ENCODE measurements at regions of chr3 and their contacts with region 1.

Region 1: DNA sequence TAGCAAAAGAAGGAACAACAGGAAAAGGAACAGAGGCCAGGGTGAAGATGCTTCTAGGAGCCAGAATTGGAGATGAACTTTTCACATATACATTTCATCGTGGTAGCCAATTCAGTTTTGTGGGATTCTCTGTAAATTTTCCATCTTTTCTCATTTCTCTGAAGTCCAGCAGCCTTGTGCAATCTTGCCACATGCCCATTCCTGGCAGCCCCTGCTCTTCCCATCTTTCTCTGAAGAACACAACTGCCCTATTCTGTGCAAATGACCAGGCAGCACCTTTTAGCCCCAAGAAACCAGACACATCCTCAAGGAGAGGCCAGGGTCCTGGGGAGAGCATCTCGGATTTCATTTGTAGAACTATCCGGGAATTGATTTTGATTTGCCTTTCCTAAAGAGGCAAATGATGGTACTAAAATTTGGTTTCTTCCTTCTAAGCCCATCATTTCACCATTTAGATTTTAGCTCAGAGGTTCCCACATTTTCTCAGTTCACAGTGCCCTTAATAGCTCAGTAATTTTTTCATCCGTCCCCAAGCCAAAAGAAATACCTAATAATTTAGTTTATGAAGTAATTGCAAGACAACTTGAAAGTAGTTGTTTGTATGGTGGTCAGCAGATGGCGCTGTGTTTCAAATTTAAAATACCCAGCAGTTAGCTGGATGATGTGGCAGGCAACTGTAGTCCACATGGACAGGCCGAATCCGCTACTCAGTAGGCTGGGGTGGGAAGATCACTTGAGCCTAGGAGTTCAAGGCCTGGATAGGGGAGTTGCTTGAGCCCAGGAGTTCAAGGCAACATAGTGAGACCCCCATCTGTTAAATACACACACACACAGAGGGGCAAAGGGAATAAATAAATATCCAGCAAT is 61.3 kb upstream of the ACKR4 start:
- DNase-seq: no peak
- H3K4me3 ChIP-seq: no peak overlapping the region
- H3K27ac ChIP-seq: peak overlapping the region; percentile 2
- H3K4me1 ChIP-seq: no peaks in the 10 kb centered on the region
- H3K27me3 ChIP-seq: no peaks in the 10 kb centered on the region
- CTCF ChIP-seq: peak; percentile 58 to 69 (median 58)
- POLR2A ChIP-seq: no peak

Region 2: GRCh38 chr3:132641837-132642538 is 106.2 kb after region 1 on chr3:
- intact Hi-C with region 1: loop called (anchors 5 kb)
- DNase-seq: no peak
- H3K4me3 ChIP-seq: no peak overlapping the region
- H3K27ac ChIP-seq: no peak overlapping the region
- H3K4me1 ChIP-seq: peaks cover 5% of the 10 kb centered on the region
- H3K27me3 ChIP-seq: no peaks in the 10 kb centered on the region
- CTCF ChIP-seq: peak; percentile 73 to 78 (median 74)
- POLR2A ChIP-seq: no peak

Measured in vagina (tissue), 2 donors.